CD8-positive, alpha-beta T cell (primary cell): ENCODE measurements at regions of chr11 and their contacts with region 1.

Region 1: DNA sequence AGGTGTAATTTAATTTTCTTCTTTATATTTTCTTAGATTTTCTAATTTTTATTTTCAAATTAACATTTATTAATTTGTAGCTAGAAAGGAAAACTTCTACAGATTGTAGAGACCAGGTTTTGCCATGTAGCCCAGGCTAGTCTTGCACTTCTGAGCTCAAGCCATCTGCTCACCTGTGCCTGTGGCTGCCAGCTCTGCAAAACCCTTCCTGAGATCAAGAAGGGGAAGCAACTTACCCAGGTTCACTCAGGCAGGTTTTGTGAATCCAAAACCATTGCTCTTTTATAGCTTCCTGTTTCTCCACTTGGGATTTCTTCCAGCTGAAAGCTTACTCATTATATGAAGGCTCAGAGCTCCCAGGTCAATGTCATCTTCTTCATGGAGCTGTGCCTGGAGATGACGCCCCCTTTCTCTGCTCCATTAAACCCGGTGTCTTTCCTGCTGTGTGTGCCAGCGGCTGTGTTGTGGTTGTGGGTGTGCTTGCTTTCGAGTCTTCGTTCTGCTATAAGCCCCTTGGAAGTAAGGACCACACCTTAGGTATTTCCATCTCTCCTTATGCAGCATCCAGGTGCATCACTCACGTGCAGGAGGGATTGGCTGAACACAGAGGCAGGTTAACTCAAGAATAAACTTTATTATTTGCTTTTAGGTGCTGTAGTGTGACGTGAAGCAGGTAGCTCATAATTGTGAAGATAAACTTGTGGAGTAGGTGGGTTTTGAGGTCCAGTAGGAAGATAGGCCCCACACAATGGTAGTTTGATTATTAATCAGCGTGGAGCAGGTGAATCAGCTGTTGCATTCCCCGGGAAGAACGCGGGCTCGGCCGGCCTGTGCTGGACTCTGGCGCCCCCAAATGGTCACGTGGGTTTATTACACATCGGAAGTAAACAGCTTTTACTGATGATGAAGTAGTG is 42.2 kb upstream of the INCENP start:
- DNase-seq: peak; percentile 66 to 89 (median 80)
- ATAC-seq: peak; percentile 92
- H3K4me3 ChIP-seq: no peak overlapping the region
- H3K4me3 Mint-ChIP-seq: peak overlapping the region; percentile 59
- H3K27ac ChIP-seq: no peak overlapping the region
- H3K27ac Mint-ChIP-seq: peak overlapping the region; percentile 37
- H3K4me1 ChIP-seq: no peaks in the 10 kb centered on the region
- H3K4me1 Mint-ChIP-seq: peaks cover 7% of the 10 kb centered on the region
- H3K27me3 ChIP-seq: no peaks in the 10 kb centered on the region
- H3K27me3 Mint-ChIP-seq: no peaks in the 10 kb centered on the region
- CTCF ChIP-seq: peak; percentile 94

Region 2: DNA sequence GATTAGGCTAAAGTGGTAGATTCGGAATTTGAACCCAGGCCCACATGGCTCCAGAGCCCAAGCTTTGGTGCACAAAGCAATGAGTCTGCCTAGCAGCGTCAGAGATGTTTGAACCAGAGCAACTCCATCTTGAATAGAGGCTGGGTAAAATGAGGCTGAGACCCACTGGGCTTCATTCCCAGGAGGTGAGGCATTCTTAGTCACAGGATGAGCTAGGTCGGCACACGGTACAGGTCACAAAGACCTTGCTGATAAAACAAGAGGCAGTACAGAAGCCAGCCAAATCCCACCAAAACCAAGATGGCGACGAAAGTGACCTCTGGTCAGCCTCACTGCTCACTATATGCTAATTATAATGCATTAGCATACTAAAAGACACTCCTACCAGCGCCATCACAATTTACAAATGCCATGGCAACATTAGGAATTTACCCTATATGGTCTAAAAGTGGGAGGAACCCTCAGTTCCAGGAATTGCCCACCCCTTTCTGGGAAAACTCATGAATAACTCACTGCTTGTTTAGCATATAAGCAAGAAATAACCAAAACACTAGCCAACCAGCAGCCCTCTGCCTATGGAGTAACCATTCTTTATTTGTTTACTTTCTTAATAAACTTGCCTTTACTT is 441.7 kb before region 1 on chr11:
- CTCF ChIA-PET with region 1: no interaction called
- POLR2A ChIA-PET with region 1: no interaction called
- intact Hi-C with region 1: no loop called
- DNase-seq: no peak
- ATAC-seq: no peak
- H3K4me3 ChIP-seq: no peak overlapping the region
- H3K4me3 Mint-ChIP-seq: no peak overlapping the region
- H3K27ac ChIP-seq: no peak overlapping the region
- H3K27ac Mint-ChIP-seq: no peak overlapping the region
- H3K4me1 ChIP-seq: no peaks in the 10 kb centered on the region
- H3K4me1 Mint-ChIP-seq: no peaks in the 10 kb centered on the region
- H3K27me3 ChIP-seq: no peaks in the 10 kb centered on the region
- H3K27me3 Mint-ChIP-seq: peaks cover 3% of the 10 kb centered on the region
- CTCF ChIP-seq: no peak

Region 3: DNA sequence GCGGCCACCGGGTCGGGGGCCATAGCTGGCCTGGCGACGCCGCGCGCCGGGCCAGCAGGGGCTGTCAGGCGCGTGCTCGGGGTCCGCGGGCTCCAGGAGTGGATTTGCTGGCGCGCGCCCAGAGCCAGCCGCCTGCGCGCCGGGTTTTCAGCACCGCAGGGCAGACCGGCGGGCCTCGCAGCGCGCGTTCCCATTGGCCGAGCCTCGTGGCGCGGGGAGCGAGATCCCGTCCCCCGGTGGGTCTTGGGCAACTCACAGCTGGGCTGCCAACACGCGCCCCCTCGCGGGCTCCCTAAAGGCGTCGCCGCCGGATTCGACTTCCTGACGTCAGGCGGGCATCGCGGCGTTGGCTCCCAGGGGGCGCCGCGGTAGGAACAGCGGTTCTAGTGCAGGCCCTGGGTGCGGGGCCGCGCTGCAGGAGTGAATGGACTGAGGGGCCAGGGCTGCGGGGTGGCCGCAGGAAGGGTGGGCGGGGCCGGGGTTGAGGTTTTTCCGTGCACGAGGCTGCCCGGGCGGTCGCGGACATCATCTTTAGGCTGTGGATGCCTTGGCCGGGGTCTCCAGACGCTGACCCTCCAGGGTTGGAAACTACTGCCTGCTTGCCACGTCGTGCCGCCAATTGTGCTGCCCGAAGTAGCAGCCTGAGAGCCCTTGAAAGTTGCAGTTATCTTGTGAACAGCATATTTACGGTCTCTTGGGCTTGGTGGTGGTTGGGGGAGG is 264.7 kb before region 1 on chr11 and contains the start of gene FADS1:
- CTCF ChIA-PET with region 1: interaction called, 13 read pairs
- POLR2A ChIA-PET with region 1: no interaction called
- intact Hi-C with region 1: no loop called
- DNase-seq: peak; percentile 26 to 87 (median 73)
- ATAC-seq: peak; percentile 60
- H3K4me3 ChIP-seq: peak within 1 kb of the TSS; percentile 57 to 73
- H3K4me3 Mint-ChIP-seq: peak within 1 kb of the TSS; percentile 94
- H3K27ac ChIP-seq: peak within 1 kb of the TSS; percentile 10 to 27
- H3K27ac Mint-ChIP-seq: peak within 1 kb of the TSS; percentile 71
- H3K4me1 ChIP-seq: peaks cover 12% of the 10 kb centered on the region
- H3K4me1 Mint-ChIP-seq: peaks cover 17% of the 10 kb centered on the region
- H3K27me3 ChIP-seq: peaks cover 0 to 3% of the 10 kb centered on the region in 2 experiments
- H3K27me3 Mint-ChIP-seq: no peaks in the 10 kb centered on the region
- CTCF ChIP-seq: no peak
- total RNA-seq, gene FADS1: 3.1 TPM

Region 4: GRCh38 chr11:61891331-61892084 is 190.1 kb before region 1 on chr11 and contains the start of gene FADS3:
- CTCF ChIA-PET with region 1: interaction called, 356 read pairs
- POLR2A ChIA-PET with region 1: no interaction called
- intact Hi-C with region 1: no loop called
- DNase-seq: peak; percentile 23 to 89 (median 65)
- ATAC-seq: peak; percentile 61
- H3K4me3 ChIP-seq: peak within 1 kb of the TSS; percentile 67 to 70
- H3K4me3 Mint-ChIP-seq: peak within 1 kb of the TSS; percentile 81
- H3K27ac ChIP-seq: peak within 1 kb of the TSS in 1 of 2 experiments; percentile 54
- H3K27ac Mint-ChIP-seq: no peak within 1 kb of the TSS
- H3K4me1 ChIP-seq: peaks cover 11% of the 10 kb centered on the region
- H3K4me1 Mint-ChIP-seq: peaks cover 4% of the 10 kb centered on the region
- H3K27me3 ChIP-seq: no peaks in the 10 kb centered on the region
- H3K27me3 Mint-ChIP-seq: peaks cover 1% of the 10 kb centered on the region
- CTCF ChIP-seq: no peak
- total RNA-seq, gene FADS3: 11.5 to 14.9 TPM

Region 5: GRCh38 chr11:61947486-61948210 is 134.0 kb before region 1 on chr11:
- CTCF ChIA-PET with region 1: interaction called, 54 read pairs
- POLR2A ChIA-PET with region 1: no interaction called
- intact Hi-C with region 1: loop called (anchors 1 kb)
- DNase-seq: peak; percentile 34 to 78 (median 69)
- ATAC-seq: peak; percentile 82
- H3K4me3 ChIP-seq: no peak overlapping the region
- H3K4me3 Mint-ChIP-seq: no peak overlapping the region
- H3K27ac ChIP-seq: no peak overlapping the region
- H3K27ac Mint-ChIP-seq: no peak overlapping the region
- H3K4me1 ChIP-seq: no peaks in the 10 kb centered on the region
- H3K4me1 Mint-ChIP-seq: no peaks in the 10 kb centered on the region
- H3K27me3 ChIP-seq: no peaks in the 10 kb centered on the region
- H3K27me3 Mint-ChIP-seq: peaks cover 8% of the 10 kb centered on the region
- CTCF ChIP-seq: peak; percentile 76

Region 6: GRCh38 chr11:62064226-62064625 is 17.4 kb before region 1 on chr11:
- CTCF ChIA-PET with region 1: interaction called, 39 read pairs
- POLR2A ChIA-PET with region 1: no interaction called
- intact Hi-C with region 1: no loop called
- DNase-seq: no peak
- ATAC-seq: no peak
- H3K4me3 ChIP-seq: no peak overlapping the region
- H3K4me3 Mint-ChIP-seq: no peak overlapping the region
- H3K27ac ChIP-seq: no peak overlapping the region
- H3K27ac Mint-ChIP-seq: no peak overlapping the region
- H3K4me1 ChIP-seq: no peaks in the 10 kb centered on the region
- H3K4me1 Mint-ChIP-seq: no peaks in the 10 kb centered on the region
- H3K27me3 ChIP-seq: no peaks in the 10 kb centered on the region
- H3K27me3 Mint-ChIP-seq: peaks cover 5% of the 10 kb centered on the region
- CTCF ChIP-seq: no peak